ENCODE measurements at regions of chr10 and their contacts with region 1.

Region 1: GRCh38 chr10:25573316-25573715 is 360.7 kb upstream of the MYO3A start:
- DNase-seq: no peak
- H3K4me3 ChIP-seq: no peak overlapping the region
- H3K27ac ChIP-seq: no peak overlapping the region
- H3K4me1 ChIP-seq: no peaks in the 10 kb centered on the region
- H3K27me3 ChIP-seq: no peaks in the 10 kb centered on the region
- CTCF ChIP-seq: no peak

Region 2: GRCh38 chr10:25382029-25382810 is 191.1 kb before region 1 on chr10:
- CTCF ChIA-PET with region 1: no interaction called
- POLR2A ChIA-PET with region 1: interaction called, 35 read pairs
- intact Hi-C with region 1: no loop called
- DNase-seq: no peak
- H3K4me3 ChIP-seq: no peak overlapping the region
- H3K27ac ChIP-seq: no peak overlapping the region
- H3K4me1 ChIP-seq: no peaks in the 10 kb centered on the region
- H3K27me3 ChIP-seq: no peaks in the 10 kb centered on the region
- CTCF ChIP-seq: no peak

Region 3: DNA sequence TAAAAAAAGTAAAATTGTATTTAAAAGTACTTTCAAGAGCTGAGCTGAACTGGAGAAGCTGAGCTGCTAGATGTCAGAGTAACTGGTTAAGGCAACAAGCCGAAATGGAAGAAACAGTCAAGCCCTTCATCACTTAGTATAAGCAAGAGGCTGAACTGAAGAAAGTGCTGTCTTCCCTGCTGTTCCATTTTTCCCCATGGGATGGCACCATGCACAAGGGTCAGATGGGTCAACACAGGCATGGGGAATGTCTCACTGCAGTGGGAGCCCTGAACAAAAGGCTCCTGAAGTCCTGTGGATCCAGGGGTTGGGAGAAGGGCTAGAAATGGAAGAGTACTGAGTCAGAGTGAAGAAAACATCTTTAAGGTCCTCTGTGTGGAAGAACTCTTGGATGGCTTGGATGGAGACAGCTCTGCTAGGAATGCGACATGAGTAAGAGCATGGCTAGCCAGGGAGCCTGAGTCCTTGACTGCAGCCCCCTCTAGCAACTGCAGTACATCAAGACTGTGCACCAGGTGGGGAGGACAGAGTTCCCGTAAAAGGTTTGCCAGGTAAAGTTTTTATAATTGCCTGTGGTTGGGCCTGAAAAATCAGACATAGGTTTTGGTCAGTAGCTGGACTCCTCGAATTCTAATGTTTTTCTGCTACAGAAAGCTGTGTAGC is 50.2 kb before region 1 on chr10:
- CTCF ChIA-PET with region 1: no interaction called
- POLR2A ChIA-PET with region 1: no interaction called
- intact Hi-C with region 1: no loop called
- DNase-seq: no peak
- H3K4me3 ChIP-seq: no peak overlapping the region
- H3K27ac ChIP-seq: no peak overlapping the region
- H3K4me1 ChIP-seq: no peaks in the 10 kb centered on the region
- H3K27me3 ChIP-seq: no peaks in the 10 kb centered on the region
- CTCF ChIP-seq: no peak

Region 4: DNA sequence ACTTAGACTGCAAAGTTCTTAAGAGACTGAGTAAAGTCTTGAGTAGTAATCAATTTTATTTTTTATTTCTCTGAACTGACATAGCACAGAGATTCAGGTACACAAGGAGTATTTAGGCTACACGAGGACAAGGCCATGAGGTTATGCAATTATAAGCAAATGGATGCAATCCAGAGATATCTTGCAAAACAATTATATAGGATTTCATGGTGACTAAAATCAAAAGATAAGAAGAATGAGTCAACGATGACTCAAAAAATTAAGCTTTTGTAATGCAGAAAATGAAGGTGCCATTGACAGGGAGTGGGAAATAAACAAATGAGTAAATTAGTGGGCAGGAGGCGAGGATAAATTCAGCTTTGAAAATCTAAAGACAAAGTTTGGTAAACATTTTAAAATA is 294.0 kb after region 1 on chr10:
- CTCF ChIA-PET with region 1: no interaction called
- POLR2A ChIA-PET with region 1: no interaction called
- intact Hi-C with region 1: no loop called
- DNase-seq: no peak
- H3K4me3 ChIP-seq: no peak overlapping the region
- H3K27ac ChIP-seq: no peak overlapping the region
- H3K4me1 ChIP-seq: no peaks in the 10 kb centered on the region
- H3K27me3 ChIP-seq: no peaks in the 10 kb centered on the region
- CTCF ChIP-seq: no peak